Caco-2 (cell line): ENCODE measurements at regions of chr22 and their contacts with region 1.

Region 1: GRCh38 chr22:46377566-46378425 is 42.3 kb downstream of the TRMU start:
- DNase-seq: peak; percentile 96 to 98
- H3K4me3 ChIP-seq: peak overlapping the region; percentile 21
- H3K4me3 Mint-ChIP-seq: peak overlapping the region; percentile 76
- H3K27ac Mint-ChIP-seq: peak overlapping the region; percentile 99
- H3K4me1 ChIP-seq: peaks cover 40% of the 10 kb centered on the region
- H3K4me1 Mint-ChIP-seq: peaks cover 47% of the 10 kb centered on the region
- H3K27me3 ChIP-seq: no peaks in the 10 kb centered on the region
- H3K27me3 Mint-ChIP-seq: no peaks in the 10 kb centered on the region
- CTCF ChIP-seq: no peak

Region 2: GRCh38 chr22:46287873-46288751 is 89.7 kb before region 1 on chr22:
- CTCF ChIA-PET with region 1: no interaction called
- POLR2A ChIA-PET with region 1: no interaction called
- intact Hi-C with region 1: no loop called
- DNase-seq: no peak
- H3K4me3 ChIP-seq: no peak overlapping the region
- H3K4me3 Mint-ChIP-seq: no peak overlapping the region
- H3K27ac Mint-ChIP-seq: peak overlapping the region; percentile 49
- H3K4me1 ChIP-seq: no peaks in the 10 kb centered on the region
- H3K4me1 Mint-ChIP-seq: no peaks in the 10 kb centered on the region
- H3K27me3 ChIP-seq: no peaks in the 10 kb centered on the region
- H3K27me3 Mint-ChIP-seq: no peaks in the 10 kb centered on the region
- CTCF ChIP-seq: no peak

Region 3: DNA sequence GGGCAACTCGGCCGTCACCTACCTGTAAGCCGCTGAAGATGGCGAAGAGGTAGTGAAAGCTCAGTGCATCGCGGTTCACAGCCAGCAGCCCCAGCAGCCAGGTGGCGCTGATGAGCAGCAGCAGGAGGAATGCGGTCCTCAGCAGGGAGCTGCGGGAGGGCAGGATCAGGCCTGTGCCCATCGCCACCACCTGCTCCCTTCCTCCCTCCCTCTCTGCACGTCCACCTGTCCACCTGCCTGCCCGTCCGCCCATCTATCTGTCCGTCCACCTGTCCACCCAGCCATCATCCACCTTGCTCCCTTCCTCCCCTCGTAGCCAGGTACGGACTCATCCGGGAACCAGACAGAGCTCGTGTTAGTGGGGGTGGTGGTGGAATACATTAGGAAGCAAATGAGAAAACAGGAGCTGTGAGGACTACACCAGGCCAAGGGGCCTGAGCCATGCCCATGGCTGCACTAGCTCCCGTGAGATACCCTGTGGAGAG is 10.0 kb before region 1 on chr22:
- CTCF ChIA-PET with region 1: interaction called, 17 read pairs
- POLR2A ChIA-PET with region 1: no interaction called
- intact Hi-C with region 1: loop called (anchors 1 kb)
- DNase-seq: peak in 1 of 2 experiments; percentile 73
- H3K4me3 ChIP-seq: no peak overlapping the region
- H3K4me3 Mint-ChIP-seq: no peak overlapping the region
- H3K27ac Mint-ChIP-seq: no peak overlapping the region
- H3K4me1 ChIP-seq: peaks cover 23% of the 10 kb centered on the region
- H3K4me1 Mint-ChIP-seq: peaks cover 26% of the 10 kb centered on the region
- H3K27me3 ChIP-seq: no peaks in the 10 kb centered on the region
- H3K27me3 Mint-ChIP-seq: no peaks in the 10 kb centered on the region
- CTCF ChIP-seq: peak; percentile 79 to 81

Region 4: GRCh38 chr22:46390652-46391301 is 13.0 kb after region 1 on chr22:
- CTCF ChIA-PET with region 1: no interaction called
- POLR2A ChIA-PET with region 1: no interaction called
- intact Hi-C with region 1: no loop called
- DNase-seq: peak in 1 of 2 experiments; percentile 39
- H3K4me3 ChIP-seq: no peak overlapping the region
- H3K4me3 Mint-ChIP-seq: no peak overlapping the region
- H3K27ac Mint-ChIP-seq: peak overlapping the region; percentile 76
- H3K4me1 ChIP-seq: no peaks in the 10 kb centered on the region
- H3K4me1 Mint-ChIP-seq: no peaks in the 10 kb centered on the region
- H3K27me3 ChIP-seq: no peaks in the 10 kb centered on the region
- H3K27me3 Mint-ChIP-seq: no peaks in the 10 kb centered on the region
- CTCF ChIP-seq: peak in 1 of 2 experiments; percentile 16

Region 5: DNA sequence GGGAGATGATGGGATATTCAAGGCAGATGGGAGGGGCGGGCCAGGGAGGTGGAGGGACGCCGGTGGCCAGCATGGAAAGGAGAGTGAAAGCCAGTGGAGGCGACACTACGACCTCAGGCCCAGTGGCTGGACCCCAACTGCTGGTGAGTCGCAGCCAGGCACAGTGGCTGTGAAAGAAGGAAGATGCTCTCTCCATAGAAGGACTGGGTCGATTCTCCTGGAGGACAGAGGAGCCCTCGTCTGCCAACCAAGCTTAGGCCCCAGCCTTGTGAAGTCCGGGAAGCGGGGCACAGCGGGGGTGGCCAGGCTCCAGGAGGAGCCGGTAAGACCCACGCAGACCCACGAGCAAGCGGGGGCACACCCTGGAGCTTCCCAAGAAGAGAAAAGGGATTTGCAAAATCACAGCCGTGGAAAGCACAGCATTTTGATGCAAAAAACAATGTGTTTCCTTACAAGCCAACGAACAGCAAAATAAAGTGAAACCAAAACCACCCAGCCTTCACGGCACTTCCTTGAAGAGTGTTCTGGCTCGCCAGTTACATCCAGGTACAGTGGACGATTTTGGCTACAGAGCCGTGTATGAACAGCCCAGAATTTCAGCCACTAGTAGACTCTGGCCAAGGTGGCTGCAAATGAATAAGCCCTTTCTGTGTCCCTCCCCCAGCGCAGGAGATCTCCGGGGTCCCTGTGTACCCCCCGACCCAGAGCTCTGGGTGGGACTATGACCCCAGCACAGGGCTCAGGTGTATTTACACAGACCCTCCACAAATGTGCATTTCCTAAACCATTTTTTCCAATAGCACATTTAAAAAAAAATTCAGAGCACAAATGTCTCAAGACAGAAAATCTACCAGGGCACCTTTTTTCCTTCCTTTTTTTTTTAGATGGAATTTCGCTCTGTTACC is 54.6 kb after region 1 on chr22:
- CTCF ChIA-PET with region 1: no interaction called
- POLR2A ChIA-PET with region 1: no interaction called
- intact Hi-C with region 1: loop called (anchors 5 kb)
- DNase-seq: no peak
- H3K4me3 ChIP-seq: no peak overlapping the region
- H3K4me3 Mint-ChIP-seq: no peak overlapping the region
- H3K27ac Mint-ChIP-seq: peak overlapping the region; percentile 63
- H3K4me1 ChIP-seq: peaks cover 21% of the 10 kb centered on the region
- H3K4me1 Mint-ChIP-seq: peaks cover 15% of the 10 kb centered on the region
- H3K27me3 ChIP-seq: no peaks in the 10 kb centered on the region
- H3K27me3 Mint-ChIP-seq: no peaks in the 10 kb centered on the region
- CTCF ChIP-seq: no peak

Region 6: GRCh38 chr22:46528121-46528610 is 150.4 kb after region 1 on chr22:
- CTCF ChIA-PET with region 1: no interaction called
- POLR2A ChIA-PET with region 1: no interaction called
- intact Hi-C with region 1: loop called (anchors 1 kb)
- DNase-seq: peak; percentile 78 to 79
- H3K4me3 ChIP-seq: no peak overlapping the region
- H3K4me3 Mint-ChIP-seq: peak overlapping the region; percentile 62
- H3K27ac Mint-ChIP-seq: peak overlapping the region; percentile 75
- H3K4me1 ChIP-seq: peaks cover 10% of the 10 kb centered on the region
- H3K4me1 Mint-ChIP-seq: peaks cover 32% of the 10 kb centered on the region
- H3K27me3 ChIP-seq: no peaks in the 10 kb centered on the region
- H3K27me3 Mint-ChIP-seq: no peaks in the 10 kb centered on the region
- CTCF ChIP-seq: no peak